ENCODE measurements at regions of chr5 and their contacts with region 1.

Region 1: GRCh38 chr5:41869739-41870626 is at the start of gene OXCT1:
- DNase-seq: peak; percentile 98
- H3K4me3 Mint-ChIP-seq: peak within 1 kb of the TSS; percentile 92
- H3K27ac Mint-ChIP-seq: peak within 1 kb of the TSS; percentile 85
- H3K4me1 Mint-ChIP-seq: peaks cover 48% of the 10 kb centered on the region
- H3K27me3 Mint-ChIP-seq: no peaks in the 10 kb centered on the region
- total RNA-seq, gene OXCT1: 92.6 and 93.4 TPM in 2 replicates

Region 2: DNA sequence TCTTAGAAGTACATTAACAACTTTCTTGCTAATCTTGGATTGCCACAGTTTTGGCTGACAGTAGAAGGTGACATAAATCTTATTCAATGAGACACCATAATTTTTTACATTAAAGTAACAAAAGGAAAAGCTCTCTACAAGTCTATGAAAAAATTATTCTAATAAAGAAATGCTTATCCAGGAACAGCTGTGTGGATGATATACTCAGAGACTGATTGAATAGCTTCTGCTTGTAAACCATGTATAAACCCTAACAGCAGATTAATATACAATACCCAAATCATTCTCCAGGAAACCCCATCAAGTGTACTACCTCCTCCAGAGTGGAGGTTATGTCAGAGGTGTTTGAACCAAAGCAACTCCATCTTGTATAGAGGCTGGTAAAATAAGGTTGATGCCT is 1771.7 kb before region 1 on chr5:
- intact Hi-C with region 1: no loop called
- DNase-seq: no peak
- H3K4me3 Mint-ChIP-seq: no peak overlapping the region
- H3K27ac Mint-ChIP-seq: no peak overlapping the region
- H3K4me1 Mint-ChIP-seq: no peaks in the 10 kb centered on the region
- H3K27me3 Mint-ChIP-seq: no peaks in the 10 kb centered on the region

Region 3: DNA sequence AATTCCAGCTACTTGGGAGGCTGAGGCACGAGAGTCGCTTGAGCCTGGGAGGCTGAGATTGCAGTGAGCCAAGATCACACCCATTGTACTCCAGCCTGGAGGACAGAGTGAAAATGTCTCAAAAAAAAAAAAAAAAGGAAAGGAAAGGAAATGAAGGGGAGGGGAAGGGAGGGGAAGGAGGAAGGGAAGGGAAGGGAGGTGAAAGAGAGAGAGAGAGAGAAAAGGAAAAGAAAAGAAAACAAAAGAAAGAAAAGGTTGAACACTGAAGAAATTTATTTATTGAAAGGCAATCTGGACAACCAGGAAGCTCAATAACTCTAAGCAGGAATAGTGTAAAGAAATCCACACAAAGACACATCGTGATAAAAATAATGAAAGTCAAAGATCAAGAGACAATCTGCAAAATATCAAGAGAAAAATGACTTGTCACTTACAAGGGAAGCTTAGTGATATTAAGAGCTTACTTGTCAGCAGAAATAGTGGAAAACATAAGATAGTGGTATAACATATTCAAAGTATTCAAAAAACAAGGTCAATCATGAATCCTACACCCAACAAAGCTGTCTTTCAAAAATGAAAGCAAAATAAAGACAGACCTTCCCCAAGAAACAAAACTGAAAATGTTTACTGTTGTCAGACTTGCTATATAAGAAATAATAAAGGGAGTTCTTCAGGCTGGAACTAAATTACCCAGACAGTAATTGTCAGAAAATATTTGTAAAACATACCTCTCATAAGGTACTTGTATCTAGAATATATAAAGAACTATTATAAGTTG is 23.3 kb after region 1 on chr5:
- intact Hi-C with region 1: loop called (anchors 2 kb)
- DNase-seq: no peak
- H3K4me3 Mint-ChIP-seq: peak overlapping the region; percentile 61
- H3K27ac Mint-ChIP-seq: peak overlapping the region; percentile 1
- H3K4me1 Mint-ChIP-seq: peaks cover 17% of the 10 kb centered on the region
- H3K27me3 Mint-ChIP-seq: peaks cover 29% of the 10 kb centered on the region

Region 4: DNA sequence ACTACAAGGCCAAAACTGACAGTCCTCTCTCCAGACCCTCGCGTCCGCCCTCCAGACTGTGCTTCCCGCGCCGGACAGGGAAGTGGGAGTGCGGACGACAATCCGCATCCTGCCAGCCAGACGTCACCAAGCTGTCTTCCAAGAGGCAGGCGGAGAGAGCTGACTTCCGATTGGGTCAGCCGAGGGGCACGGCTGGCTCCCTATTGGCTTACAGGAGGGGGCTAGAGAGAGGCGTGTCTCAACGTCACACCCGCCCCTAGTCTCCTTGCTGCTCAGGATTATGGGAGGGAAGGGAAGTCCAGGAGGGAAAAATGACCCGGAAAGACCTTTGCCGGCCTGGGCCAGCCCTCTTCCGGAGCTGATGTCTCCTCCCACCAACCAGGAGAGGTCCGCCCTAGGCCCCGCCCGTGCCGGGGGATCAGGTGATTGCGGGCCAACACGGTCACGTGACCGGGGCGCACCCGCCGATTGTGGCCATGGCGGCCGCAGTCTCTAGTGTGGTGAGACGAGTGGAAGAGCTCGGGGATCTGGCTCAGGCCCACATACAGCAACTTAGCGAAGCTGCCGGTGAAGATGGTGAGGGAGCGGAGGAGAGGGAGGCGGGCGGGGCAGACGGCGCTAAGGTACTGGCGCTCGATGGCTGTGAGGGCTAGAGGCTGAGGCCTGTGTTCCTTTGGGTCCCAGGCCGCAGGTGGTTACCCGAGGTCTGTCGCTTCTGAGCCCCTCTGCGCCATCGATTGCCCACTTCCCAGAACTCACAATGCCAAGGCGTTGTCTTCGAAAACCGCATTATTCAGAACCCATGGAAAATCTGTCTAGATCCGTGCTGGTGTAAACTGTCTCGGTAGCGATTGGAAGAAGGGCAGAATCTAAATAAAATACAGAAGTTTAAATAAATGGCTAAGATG is 34.2 kb after region 1 on chr5 and contains the start of gene RIMOC1:
- intact Hi-C with region 1: loop called (anchors 1 kb)
- DNase-seq: peak; percentile 100
- H3K4me3 Mint-ChIP-seq: peak within 1 kb of the TSS; percentile 92
- H3K27ac Mint-ChIP-seq: peak within 1 kb of the TSS; percentile 96
- H3K4me1 Mint-ChIP-seq: peaks cover 43% of the 10 kb centered on the region
- H3K27me3 Mint-ChIP-seq: peaks cover 9% of the 10 kb centered on the region
- total RNA-seq, gene RIMOC1: 29.6 and 31.7 TPM in 2 replicates